Left colon (tissue), 2 donors: ENCODE measurements at regions of chr9 and their contacts with region 1.

Region 1: DNA sequence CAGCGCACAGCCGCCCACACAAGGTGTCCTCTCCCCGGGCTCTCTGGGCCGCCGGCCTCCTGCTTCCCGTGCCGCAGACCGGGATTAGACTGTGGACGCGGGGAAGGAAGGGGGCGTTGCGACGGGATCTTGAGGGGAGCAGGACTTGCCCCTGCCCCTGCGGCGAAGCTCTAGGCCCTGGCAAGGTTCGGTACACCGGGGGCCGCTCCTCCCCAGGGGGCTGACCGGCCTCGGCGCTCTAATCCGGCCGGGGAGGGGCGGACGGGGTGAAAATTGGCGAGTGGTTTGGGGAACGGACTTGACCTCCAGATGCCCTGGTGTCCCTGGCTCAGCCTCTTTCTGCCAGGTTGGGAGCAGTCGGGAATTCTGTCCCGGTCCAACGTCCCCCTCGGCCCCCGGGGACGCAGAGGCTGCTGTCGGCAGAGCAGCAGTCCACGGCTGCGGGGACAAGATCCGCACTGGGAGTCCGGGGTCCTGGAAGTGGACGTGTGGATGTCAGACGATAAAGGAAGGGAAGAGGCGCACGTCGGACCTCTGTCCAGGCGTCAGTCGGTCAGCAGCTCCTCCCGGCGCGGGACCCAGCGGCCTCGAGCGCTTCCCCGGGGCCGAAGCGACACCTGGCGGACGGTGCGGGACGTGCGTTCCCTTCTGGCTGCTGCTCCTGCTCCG is 1.9 kb upstream of the CNTFR start:
- DNase-seq: peak; percentile 74 to 90
- ATAC-seq: peak; percentile 83

Region 2: DNA sequence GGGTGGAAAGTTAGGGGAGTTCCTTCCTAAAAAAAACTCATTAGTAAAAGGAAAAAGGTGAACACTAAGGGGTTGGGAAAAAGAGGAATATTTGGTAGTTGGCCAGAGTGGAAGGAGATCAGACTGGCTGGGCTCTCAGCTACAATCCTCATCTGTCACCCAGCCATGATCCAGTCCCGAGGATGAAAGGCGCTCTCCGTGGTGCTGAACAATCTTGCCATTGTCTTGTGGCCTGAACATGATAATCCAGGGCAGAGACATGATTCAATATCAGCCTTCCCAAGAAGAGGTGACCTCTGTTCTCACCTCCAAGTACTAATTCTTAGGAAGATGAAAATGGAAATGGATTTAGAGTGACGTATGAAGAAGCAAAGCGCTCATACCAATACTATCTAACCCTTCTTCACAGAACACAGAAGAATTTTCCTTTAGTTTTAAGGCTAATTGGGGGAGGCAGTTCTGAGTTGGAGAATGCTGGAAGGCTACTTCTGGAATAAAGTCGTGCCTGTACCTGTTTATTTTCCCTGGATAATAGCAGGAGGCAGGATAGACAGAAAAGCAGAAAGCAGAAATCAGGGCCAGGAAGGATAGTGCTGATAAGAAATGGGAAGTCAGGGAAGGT is 178.0 kb before region 1 on chr9:
- intact Hi-C with region 1: loop called in 1 of 2 experiments (anchors 10 kb)
- DNase-seq: peak in 1 of 2 donors; percentile 65
- ATAC-seq: no peak

Region 3: DNA sequence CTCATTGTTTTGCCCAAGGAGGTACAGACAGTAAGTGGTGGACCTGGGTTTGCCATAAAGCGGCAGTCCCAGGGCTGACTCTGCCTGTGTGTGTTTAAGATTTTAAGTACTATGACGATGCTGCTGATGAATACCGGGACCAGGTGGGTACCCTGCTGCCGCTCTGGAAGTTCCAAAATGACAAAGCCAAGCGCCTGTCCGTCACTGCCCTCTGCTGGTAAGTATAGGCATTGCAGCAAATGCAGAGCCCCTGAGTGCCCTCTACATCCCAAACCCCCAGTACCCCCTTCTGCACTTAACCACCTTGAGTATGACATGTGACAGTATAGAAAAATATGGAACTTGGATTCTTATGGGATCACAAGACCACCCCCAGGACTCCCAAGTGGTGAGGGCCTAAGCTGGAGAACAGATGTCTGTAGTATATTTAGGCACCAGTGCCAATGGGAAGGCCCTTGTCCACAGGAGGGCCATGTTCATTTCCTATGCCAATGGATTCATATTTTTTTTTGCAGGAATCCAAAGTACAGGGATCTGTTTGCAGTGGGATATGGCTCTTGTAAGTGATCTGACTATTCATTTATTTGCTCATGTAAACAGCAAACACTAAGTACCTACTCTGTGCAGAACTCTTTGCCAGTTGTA is 90.6 kb before region 1 on chr9:
- intact Hi-C with region 1: no loop called
- DNase-seq: peak in 1 of 2 donors; percentile 50
- ATAC-seq: peak; percentile 46

Region 4: GRCh38 chr9:34546834-34547827 is 44.3 kb before region 1 on chr9:
- intact Hi-C with region 1: loop called in 1 of 2 experiments (anchors 5 kb)
- DNase-seq: peak; percentile 32 to 72
- ATAC-seq: peak; percentile 71